ENCODE measurements at regions of chr9 and their contacts with region 1.

Region 1: DNA sequence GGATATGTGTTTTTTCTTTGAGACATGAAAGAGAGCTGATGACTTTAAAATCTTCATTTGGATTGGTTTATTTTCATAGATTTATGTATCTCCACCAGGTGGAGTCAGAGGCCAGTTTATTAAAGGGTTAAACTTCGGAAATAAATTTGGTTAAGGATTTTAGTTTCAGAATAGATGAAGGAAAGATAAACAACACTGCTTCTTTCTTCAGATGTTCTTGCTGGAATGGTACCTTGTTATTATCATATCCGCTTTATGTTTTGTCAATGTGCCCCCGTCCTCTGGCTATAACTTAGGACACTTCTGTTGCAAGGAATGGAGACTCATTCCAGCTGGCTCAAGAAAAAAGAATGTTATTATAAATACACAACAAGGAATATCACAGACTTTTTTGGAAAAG is 81.2 kb downstream of the ALDH1A1 start:
- DNase-seq: no peak
- H3K4me3 ChIP-seq: peak overlapping the region; percentile 41
- H3K27ac ChIP-seq: no peak overlapping the region
- H3K4me1 ChIP-seq: peaks cover 26% of the 10 kb centered on the region
- H3K27me3 ChIP-seq: no peaks in the 10 kb centered on the region
- CTCF ChIP-seq: peak; percentile 62

Region 2: DNA sequence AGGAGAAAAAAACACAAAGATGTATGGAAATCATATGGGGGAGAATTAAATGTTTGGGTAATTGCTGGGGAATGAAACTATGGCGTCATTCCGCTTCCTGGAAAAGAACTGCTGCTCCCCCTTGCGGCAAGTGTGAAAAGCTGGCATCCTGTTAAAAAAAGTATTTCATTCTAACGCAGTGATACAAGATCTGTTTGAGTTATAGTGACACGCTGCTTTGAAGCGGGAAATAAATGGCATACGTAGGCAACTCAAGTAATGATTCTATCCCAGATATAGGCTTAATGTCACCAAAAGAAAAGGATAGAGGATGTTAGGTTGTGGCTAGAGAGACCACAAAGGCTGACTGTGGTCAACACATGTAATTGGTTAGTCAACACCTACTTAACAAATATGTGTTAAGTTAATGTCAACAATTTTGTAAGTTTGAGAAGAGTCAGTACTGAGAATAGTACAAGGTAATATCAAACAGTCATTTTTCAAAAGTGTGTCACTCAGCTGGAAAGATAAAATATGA is 151.4 kb after region 1 on chr9:
- intact Hi-C with region 1: loop called (anchors 5 kb)
- DNase-seq: no peak
- H3K4me3 ChIP-seq: no peak overlapping the region
- H3K27ac ChIP-seq: no peak overlapping the region
- H3K4me1 ChIP-seq: peaks cover 8% of the 10 kb centered on the region
- H3K27me3 ChIP-seq: no peaks in the 10 kb centered on the region
- CTCF ChIP-seq: peak; percentile 83